ENCODE measurements at regions of chr1 and their contacts with region 1.

Region 1: DNA sequence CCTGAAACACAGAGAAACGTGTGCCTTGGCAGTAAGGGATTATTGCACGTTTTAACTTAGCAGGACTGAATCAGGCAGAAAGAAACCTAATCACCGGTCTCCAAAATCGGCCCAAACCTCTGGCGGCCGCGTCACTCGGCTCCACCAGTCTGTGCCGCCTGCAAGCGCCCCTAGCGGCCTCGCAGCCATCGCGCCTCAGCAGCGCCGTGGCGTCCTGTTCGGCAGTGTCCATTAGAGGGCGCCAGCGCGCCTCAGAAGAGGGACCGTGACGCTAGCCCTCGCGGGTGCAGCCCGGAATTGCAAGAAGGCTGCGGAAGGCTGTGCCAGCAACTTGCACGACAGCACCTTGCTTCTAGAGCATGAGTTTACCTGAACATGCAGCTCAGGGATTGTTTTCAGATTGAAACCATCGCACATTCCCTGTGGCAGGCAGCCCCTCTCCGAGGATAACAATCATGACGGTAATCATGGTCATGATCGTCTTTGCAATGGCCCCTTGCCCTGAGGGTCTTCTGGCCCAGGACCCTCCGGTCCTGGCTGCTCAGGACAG is 164.4 kb downstream of the TRIM33 start:
- DNase-seq: peak; percentile 83
- H3K4me3 ChIP-seq: peak overlapping the region; percentile 59
- H3K27ac ChIP-seq: peak overlapping the region; percentile 2
- H3K27me3 ChIP-seq: peaks cover 8% of the 10 kb centered on the region
- CTCF ChIP-seq: peak; percentile 100

Region 2: GRCh38 chr1:113898241-113898814 is 448.2 kb before region 1 on chr1:
- CTCF ChIA-PET with region 1: no interaction called
- POLR2A ChIA-PET with region 1: no interaction called
- DNase-seq: no peak
- H3K4me3 ChIP-seq: no peak overlapping the region
- H3K27ac ChIP-seq: no peak overlapping the region
- H3K27me3 ChIP-seq: no peaks in the 10 kb centered on the region
- CTCF ChIP-seq: no peak

Region 3: GRCh38 chr1:113978863-113979702 is 367.5 kb before region 1 on chr1 and contains the start of gene OLFML3:
- CTCF ChIA-PET with region 1: interaction called, 68 read pairs
- POLR2A ChIA-PET with region 1: no interaction called
- DNase-seq: peak; percentile 91
- H3K4me3 ChIP-seq: peak within 1 kb of the TSS; percentile 70
- H3K27ac ChIP-seq: peak within 1 kb of the TSS; percentile 99
- H3K27me3 ChIP-seq: no peaks in the 10 kb centered on the region
- CTCF ChIP-seq: peak; percentile 70
- polyA plus RNA-seq, gene OLFML3: 90.3 and 105 TPM in 2 replicates

Region 4: DNA sequence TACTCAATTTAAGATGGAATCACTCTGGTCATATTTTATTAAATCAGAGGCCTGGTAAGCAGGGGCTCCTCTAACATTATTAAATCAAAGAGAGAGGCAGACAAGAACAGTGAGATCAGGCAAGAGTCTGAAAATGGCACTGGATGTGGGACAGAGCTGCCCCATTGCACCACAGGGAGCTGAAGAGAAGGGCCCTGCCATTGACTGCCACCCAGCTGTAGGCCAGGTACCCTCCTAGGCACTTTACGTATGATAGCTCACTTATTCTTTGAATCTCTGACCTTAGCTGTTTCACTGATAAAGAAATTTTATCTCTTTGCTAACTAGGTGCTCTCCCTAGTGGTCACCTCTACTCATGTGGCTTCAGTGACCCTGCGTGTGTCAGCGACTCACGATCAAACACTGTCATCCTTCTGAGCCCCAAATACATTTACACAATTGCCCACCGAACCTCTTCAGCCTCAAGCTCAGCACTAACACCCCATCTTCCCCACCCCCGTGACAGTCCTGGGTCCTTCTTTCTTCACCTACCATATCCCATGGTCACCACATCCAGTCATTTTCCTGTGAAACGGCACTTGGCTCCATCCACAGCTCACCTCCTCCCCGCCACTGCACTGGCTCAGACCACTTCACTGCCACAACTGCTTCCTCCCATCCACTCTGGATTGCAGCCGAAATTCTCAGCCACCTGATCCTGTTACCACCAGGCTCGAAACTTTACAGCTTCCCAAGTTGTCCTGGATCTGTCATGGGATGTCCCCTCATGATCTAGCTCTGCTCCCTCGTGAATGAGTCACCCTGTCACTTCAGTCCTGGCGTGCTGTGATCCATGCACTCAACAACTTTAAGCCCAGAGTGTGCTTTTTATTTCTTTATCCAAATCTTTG is 95.6 kb before region 1 on chr1:
- CTCF ChIA-PET with region 1: no interaction called
- POLR2A ChIA-PET with region 1: no interaction called
- DNase-seq: no peak
- H3K4me3 ChIP-seq: no peak overlapping the region
- H3K27ac ChIP-seq: no peak overlapping the region
- H3K27me3 ChIP-seq: peaks cover 4% of the 10 kb centered on the region
- CTCF ChIP-seq: no peak

Region 5: GRCh38 chr1:114263343-114263742 is 83.2 kb before region 1 on chr1:
- CTCF ChIA-PET with region 1: no interaction called
- POLR2A ChIA-PET with region 1: no interaction called
- DNase-seq: no peak
- H3K4me3 ChIP-seq: no peak overlapping the region
- H3K27ac ChIP-seq: no peak overlapping the region
- H3K27me3 ChIP-seq: no peaks in the 10 kb centered on the region
- CTCF ChIP-seq: no peak

Region 6: DNA sequence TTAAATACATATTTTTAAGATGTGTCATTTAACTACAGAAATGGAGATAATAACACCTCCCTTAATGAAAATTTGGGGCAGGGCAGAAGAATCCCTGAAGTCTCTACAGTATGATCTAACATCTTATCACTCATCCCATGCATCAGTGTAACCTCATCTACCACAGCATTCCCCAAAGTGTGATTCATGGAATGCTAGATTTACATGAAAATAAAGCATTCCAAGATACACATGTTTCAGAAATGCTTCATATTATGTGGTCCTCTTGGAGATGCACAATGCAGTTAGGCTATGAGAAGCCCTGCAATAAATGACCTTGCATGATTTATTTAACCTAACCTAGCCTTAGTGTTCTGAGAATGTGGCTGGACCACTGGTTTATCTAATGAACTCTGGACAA is 26.0 kb before region 1 on chr1:
- CTCF ChIA-PET with region 1: interaction called, 35 read pairs
- POLR2A ChIA-PET with region 1: no interaction called
- DNase-seq: peak; percentile 65
- H3K4me3 ChIP-seq: no peak overlapping the region
- H3K27ac ChIP-seq: no peak overlapping the region
- H3K27me3 ChIP-seq: no peaks in the 10 kb centered on the region
- CTCF ChIP-seq: no peak

Region 7: GRCh38 chr1:114359750-114360149 is 13.2 kb after region 1 on chr1:
- CTCF ChIA-PET with region 1: interaction called, 15 read pairs
- POLR2A ChIA-PET with region 1: no interaction called
- DNase-seq: no peak
- H3K4me3 ChIP-seq: no peak overlapping the region
- H3K27ac ChIP-seq: no peak overlapping the region
- H3K27me3 ChIP-seq: no peaks in the 10 kb centered on the region
- CTCF ChIP-seq: no peak

Region 8: DNA sequence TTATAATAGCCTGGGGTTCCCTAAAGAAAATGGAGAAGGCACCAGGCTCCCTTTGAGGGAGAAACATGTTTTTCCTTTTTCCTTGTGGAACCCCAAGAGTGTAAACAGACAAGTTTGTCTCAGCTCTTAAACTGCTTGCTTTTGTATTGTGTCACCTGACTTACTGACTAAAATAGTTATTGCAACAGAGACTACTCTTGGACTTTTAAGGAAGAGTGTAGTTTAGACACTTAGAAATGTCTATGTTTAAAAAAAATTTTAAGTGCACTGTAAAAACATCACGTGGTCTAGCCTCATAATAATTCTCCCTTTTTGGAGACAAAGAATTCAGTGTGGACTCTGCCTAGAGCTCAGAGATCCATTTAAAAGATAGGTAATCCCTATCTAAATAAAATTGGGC is 23.4 kb after region 1 on chr1:
- CTCF ChIA-PET with region 1: interaction called, 23 read pairs
- POLR2A ChIA-PET with region 1: no interaction called
- DNase-seq: no peak
- H3K4me3 ChIP-seq: no peak overlapping the region
- H3K27ac ChIP-seq: no peak overlapping the region
- H3K27me3 ChIP-seq: no peaks in the 10 kb centered on the region
- CTCF ChIP-seq: no peak

Region 9: GRCh38 chr1:114428083-114428749 is 81.7 kb after region 1 on chr1:
- CTCF ChIA-PET with region 1: interaction called, 41 read pairs
- POLR2A ChIA-PET with region 1: no interaction called
- DNase-seq: no peak
- H3K4me3 ChIP-seq: no peak overlapping the region
- H3K27ac ChIP-seq: no peak overlapping the region
- H3K27me3 ChIP-seq: no peaks in the 10 kb centered on the region
- CTCF ChIP-seq: peak; percentile 56

Region 10: GRCh38 chr1:114670083-114671010 is 323.8 kb after region 1 on chr1:
- CTCF ChIA-PET with region 1: interaction called, 25 read pairs
- POLR2A ChIA-PET with region 1: no interaction called
- DNase-seq: peak; percentile 45
- H3K4me3 ChIP-seq: peak overlapping the region; percentile 81
- H3K27ac ChIP-seq: peak overlapping the region; percentile 39
- H3K27me3 ChIP-seq: peaks cover 2% of the 10 kb centered on the region
- CTCF ChIP-seq: no peak; the same call in 1 of the 2 replicates